Testis (tissue), 5 donors: ENCODE measurements at regions of chr11 and their contacts with region 1.

Region 1: GRCh38 chr11:103682318-103683184 is 353.9 kb upstream of the DDI1 start:
- DNase-seq: peak; percentile 80
- H3K4me3 ChIP-seq: no peak overlapping the region
- H3K27ac ChIP-seq: no peak overlapping the region
- H3K4me1 ChIP-seq: peaks cover 8% of the 10 kb centered on the region
- H3K27me3 ChIP-seq: no peaks in the 10 kb centered on the region
- CTCF ChIP-seq: peak; percentile 81 to 92 (median 89)
- POLR2A ChIP-seq: no peak

Region 2: DNA sequence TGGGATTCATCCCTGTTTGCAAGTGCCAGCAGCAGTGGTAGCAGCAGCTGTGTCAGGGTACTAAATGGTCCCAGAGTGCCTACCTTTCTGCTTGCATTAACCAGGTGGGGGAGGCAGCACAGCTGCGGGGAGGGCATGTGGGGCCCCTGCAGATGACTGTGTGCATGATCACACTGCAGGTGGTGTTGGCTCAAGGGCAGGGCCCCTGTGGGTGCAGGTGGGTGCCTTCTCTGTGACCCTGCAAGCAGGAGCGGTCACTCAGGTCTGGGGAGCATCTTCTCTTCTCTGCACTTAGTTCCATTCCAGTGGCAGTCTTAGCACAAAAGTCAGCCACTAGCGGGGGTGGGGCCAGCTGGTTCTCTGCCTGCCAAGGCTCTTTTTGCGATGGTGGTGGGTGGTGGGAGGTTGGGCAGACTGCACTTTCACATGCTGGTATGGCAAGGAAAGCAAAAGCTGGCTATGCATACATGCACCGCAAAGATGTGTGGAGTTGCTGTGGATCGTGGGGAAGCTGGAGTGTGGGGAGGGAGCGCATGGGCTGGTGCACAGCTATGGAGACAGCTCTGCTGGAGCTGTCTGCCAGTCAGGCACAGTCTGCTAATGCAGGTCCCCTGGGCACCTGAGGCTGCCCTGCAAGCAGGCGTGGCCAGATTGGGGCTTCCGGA is 416.3 kb before region 1 on chr11:
- intact Hi-C with region 1: no loop called
- DNase-seq: no peak
- H3K4me3 ChIP-seq: no peak overlapping the region
- H3K27ac ChIP-seq: no peak overlapping the region
- H3K4me1 ChIP-seq: no peaks in the 10 kb centered on the region
- H3K27me3 ChIP-seq: no peaks in the 10 kb centered on the region
- CTCF ChIP-seq: no peak
- POLR2A ChIP-seq: no peak

Region 3: GRCh38 chr11:103552086-103552485 is 130.5 kb before region 1 on chr11:
- intact Hi-C with region 1: no loop called
- DNase-seq: no peak
- H3K4me3 ChIP-seq: no peak overlapping the region
- H3K27ac ChIP-seq: no peak overlapping the region
- H3K4me1 ChIP-seq: no peaks in the 10 kb centered on the region
- H3K27me3 ChIP-seq: no peaks in the 10 kb centered on the region
- CTCF ChIP-seq: no peak
- POLR2A ChIP-seq: no peak

Region 4: DNA sequence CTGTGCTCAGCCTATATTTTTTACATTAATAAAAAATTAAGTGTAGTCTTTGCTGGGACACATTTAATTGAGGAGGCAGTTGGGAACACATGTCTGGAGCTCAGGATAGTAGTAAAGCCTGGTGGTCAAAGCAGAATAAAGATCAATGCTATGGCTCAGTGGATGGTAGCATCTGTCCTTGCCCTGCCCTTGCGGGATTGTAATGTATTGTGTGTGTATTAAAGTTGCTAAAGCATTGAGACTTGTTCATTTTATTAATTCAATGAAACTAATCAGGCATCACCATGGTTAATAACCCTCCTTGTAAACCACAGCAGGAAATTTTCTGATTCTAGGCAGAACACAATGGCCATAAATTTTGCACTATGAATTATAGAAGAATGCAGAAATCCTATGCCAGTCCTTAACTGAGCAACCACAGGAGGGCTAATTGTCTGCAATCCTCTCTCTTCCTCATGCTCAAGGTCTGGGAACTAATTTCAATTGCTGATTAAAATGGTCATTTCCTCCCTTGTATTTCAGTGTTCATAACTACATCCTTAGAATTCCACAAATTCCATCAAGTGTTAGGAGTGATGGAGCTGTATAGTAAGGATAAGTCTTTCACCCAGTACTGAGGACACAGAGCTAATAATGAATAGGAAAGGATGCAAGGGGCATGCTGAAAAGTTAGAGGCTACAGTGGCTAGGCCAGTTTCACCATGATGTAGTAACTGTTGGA is 49.3 kb before region 1 on chr11:
- intact Hi-C with region 1: no loop called
- DNase-seq: no peak
- H3K4me3 ChIP-seq: no peak overlapping the region
- H3K27ac ChIP-seq: no peak overlapping the region
- H3K4me1 ChIP-seq: no peaks in the 10 kb centered on the region
- H3K27me3 ChIP-seq: no peaks in the 10 kb centered on the region
- CTCF ChIP-seq: no peak
- POLR2A ChIP-seq: no peak

Region 5: DNA sequence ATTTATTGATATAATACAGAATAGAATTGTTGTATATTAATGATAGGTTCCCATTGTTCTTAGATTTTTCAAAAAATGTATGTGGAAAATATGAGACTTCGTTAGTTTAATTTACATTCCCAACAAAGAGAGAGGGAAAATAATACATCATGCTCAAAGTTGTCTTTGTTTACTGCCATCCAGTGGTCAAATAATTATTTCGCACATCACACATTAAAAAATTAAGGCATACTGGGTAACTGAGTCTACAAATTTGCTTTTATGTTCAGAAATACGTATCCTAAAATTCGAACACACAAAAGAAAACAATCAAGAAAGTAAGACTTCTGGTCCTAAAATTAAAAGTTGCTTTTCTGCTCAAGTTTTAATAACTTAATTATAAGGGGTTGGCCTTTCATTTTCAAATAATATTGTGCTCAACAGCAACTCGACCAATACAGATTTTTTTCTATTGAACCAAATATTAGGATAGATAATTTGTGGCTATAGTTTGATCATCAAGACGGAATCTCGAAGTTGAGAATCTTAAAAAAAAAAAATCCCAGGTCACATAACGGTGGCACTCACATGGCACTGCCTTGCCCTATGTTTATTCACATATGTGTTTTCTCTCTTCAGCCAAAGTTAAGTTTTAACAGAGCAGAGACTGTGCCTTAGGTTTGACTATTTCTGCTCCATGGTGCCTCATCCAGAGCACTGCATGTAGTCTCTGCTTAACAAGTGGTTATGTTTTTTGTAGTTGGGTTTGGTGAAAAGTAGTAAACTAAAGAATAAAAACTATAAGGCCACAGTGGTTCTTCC is 469.1 kb after region 1 on chr11:
- intact Hi-C with region 1: loop called (anchors 5 kb)
- DNase-seq: no peak
- H3K4me3 ChIP-seq: no peak overlapping the region
- H3K27ac ChIP-seq: no peak overlapping the region
- H3K4me1 ChIP-seq: no peaks in the 10 kb centered on the region
- H3K27me3 ChIP-seq: no peaks in the 10 kb centered on the region
- CTCF ChIP-seq: peak; percentile 24 to 38 (median 35)
- POLR2A ChIP-seq: no peak

Region 6: DNA sequence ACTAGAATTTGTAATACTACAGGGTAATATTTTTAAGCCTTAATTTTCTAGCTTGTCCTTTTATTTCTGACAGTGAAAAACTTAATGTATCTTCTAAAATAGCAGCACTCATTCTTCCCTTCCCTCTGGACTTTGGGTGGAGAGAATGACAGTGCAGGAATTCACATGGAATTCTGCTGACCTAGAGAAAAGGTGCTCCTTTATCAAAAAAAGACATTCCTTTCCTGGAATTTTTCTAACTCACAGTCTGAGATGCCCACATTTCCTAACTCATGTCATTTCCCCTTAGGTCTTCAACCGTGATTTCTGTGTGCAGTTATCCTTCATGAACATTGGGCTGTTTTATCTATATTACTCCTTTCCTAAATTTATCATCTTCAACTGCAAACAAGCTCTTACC is 619.2 kb after region 1 on chr11:
- intact Hi-C with region 1: no loop called
- DNase-seq: no peak
- H3K4me3 ChIP-seq: no peak overlapping the region
- H3K27ac ChIP-seq: no peak overlapping the region
- H3K4me1 ChIP-seq: no peaks in the 10 kb centered on the region
- H3K27me3 ChIP-seq: no peaks in the 10 kb centered on the region
- CTCF ChIP-seq: no peak
- POLR2A ChIP-seq: no peak